Dendritic cell treated with granulocyte-macrophage colony-stimulating factor and Interleukin-4, amounts not matched to agents 40 ng/mL and 50 ng/mL, for 4 days (primary cell): ENCODE measurements at regions of chr11 and their contacts with region 1.

Region 1: GRCh38 chr11:76823481-76824078 is 37.1 kb upstream of the ACER3 start:
- H3K4me3 Mint-ChIP-seq: peak overlapping the region; percentile 21
- H3K27ac Mint-ChIP-seq: peak overlapping the region; percentile 77
- H3K4me1 Mint-ChIP-seq: peaks cover 49% of the 10 kb centered on the region
- H3K27me3 Mint-ChIP-seq: no peaks in the 10 kb centered on the region

Region 2: GRCh38 chr11:76768088-76768908 is 55.3 kb before region 1 on chr11:
- intact Hi-C with region 1: no loop called
- H3K4me3 Mint-ChIP-seq: no peak overlapping the region
- H3K27ac Mint-ChIP-seq: peak overlapping the region; percentile 9
- H3K4me1 Mint-ChIP-seq: peaks cover 36% of the 10 kb centered on the region
- H3K27me3 Mint-ChIP-seq: peaks cover 62% of the 10 kb centered on the region

Region 3: GRCh38 chr11:76838678-76839068 is 15.1 kb after region 1 on chr11:
- intact Hi-C with region 1: no loop called
- H3K4me3 Mint-ChIP-seq: no peak overlapping the region
- H3K27ac Mint-ChIP-seq: peak overlapping the region; percentile 40
- H3K4me1 Mint-ChIP-seq: peaks cover 19% of the 10 kb centered on the region
- H3K27me3 Mint-ChIP-seq: peaks cover 5% of the 10 kb centered on the region

Region 4: DNA sequence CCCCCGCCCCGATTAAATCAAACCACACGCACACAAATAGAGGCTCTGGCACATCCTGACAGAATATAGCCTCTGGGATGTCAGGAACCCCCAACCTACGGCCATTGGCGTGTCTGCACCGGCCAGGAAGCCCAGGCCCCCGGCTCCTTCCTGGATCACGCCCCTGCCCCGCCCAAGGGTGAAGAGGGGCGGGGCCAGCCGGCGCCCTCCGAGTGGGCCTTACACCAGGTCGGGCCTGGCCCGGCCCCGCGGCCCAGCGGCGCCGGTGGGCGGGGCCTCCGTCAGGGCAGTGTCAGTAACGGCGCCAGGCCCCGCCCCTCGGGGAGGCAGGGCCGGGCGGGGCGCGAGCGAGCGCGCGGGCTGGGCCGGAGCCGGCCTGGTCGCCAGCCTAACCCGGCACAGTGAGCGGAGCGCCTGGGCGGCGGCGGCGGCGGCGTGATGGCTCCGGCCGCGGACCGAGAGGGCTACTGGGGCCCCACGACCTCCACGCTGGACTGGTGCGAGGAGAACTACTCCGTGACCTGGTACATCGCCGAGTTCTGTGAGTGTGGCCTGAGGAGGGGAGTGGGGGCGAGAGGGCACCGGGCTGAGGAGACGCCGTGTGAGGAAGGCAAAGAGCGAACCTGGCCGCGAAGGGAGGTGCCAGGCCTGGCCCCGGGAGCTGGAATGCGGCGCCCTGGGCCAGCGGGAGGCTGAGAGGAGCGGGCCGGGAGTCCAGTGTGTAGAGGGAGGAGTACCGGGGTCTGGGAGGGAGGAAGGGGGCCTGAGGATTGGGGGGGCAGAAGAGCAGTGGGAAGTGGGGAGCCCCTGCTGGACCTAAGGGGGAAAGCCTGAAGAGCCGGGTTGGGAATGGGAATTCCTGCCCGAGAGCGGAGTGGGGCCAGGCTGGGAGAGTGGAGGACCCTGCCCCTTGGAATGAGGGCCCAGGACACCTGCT is 37.2 kb after region 1 on chr11 and contains the start of gene ACER3:
- intact Hi-C with region 1: loop called (anchors 5 kb)
- H3K4me3 Mint-ChIP-seq: peak within 1 kb of the TSS; percentile 96
- H3K27ac Mint-ChIP-seq: peak within 1 kb of the TSS; percentile 97
- H3K4me1 Mint-ChIP-seq: peaks cover 72% of the 10 kb centered on the region
- H3K27me3 Mint-ChIP-seq: no peaks in the 10 kb centered on the region

Region 5: DNA sequence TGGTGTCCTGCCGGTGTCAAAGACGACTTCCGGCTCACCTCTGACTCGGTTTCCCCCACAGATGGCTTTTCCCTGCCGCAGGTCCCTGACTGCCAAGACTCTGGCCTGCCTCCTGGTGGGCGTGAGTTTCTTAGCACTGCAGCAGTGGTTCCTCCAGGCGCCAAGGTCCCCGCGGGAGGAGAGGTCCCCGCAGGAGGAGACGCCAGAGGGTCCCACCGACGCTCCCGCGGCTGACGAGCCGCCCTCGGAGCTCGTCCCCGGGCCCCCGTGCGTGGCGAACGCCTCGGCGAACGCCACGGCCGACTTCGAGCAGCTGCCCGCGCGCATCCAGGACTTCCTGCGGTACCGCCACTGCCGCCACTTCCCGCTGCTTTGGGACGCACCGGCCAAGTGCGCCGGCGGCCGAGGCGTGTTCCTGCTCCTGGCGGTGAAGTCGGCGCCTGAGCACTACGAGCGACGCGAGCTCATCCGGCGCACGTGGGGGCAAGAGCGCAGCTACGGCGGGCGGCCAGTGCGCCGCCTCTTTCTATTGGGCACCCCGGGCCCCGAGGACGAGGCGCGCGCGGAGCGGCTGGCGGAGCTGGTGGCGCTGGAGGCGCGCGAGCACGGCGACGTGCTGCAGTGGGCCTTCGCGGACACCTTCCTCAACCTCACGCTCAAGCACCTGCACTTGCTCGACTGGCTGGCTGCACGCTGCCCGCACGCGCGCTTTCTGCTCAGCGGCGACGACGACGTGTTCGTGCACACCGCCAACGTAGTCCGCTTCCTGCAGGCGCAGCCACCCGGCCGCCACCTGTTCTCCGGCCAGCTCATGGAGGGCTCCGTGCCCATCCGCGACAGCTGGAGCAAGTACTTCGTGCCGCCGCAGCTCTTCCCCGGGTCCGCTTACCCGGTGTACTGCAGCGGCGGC is 216.2 kb after region 1 on chr11:
- intact Hi-C with region 1: loop called (anchors 10 kb)
- H3K4me3 Mint-ChIP-seq: peak overlapping the region; percentile 55
- H3K27ac Mint-ChIP-seq: no peak overlapping the region
- H3K4me1 Mint-ChIP-seq: peaks cover 58% of the 10 kb centered on the region
- H3K27me3 Mint-ChIP-seq: peaks cover 70% of the 10 kb centered on the region